CD4-positive, alpha-beta memory T cell (primary cell): ENCODE measurements at regions of chr17 and their contacts with region 1.

Region 1: DNA sequence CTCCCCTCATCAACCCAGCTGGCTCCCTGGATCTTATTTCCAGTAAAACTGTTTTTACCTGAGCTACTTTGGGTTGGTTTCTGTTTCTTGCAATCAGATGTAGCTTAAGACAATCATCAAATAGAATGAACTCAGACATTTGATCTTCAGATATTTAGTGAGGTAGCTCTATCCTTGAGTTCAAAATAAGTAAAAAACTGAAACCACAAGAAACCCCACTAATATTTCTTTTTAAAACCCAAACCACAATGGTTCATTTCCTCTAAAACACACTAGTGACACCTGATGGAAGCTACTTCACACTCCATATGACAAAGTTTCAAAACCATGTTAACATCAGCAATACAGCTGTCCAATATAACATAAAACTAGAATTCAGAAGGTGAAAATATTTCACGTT is 37.8 kb downstream of the CACNG1 start:
- DNase-seq: peak in 4 of 5 donors; percentile 53 to 67 (median 60)
- H3K4me3 ChIP-seq: no peak overlapping the region
- H3K4me3 Mint-ChIP-seq: peak overlapping the region in 7 of 8 donors; percentile 9 to 70 (median 45)
- H3K27ac ChIP-seq: peak overlapping the region; percentile 21
- H3K27ac Mint-ChIP-seq: peak overlapping the region; percentile 43 to 90 (median 67)
- H3K4me1 ChIP-seq: peaks cover 26% of the 10 kb centered on the region
- H3K4me1 Mint-ChIP-seq: peaks cover 15 to 31% (median 23%) of the 10 kb centered on the region in 4 donors
- H3K27me3 ChIP-seq: no peaks in the 10 kb centered on the region
- H3K27me3 Mint-ChIP-seq: no peaks in the 10 kb centered on the region

Region 2: GRCh38 chr17:66727639-66728570 is 354.2 kb before region 1 on chr17:
- CTCF ChIA-PET with region 1: interaction called, 3 read pairs
- POLR2A ChIA-PET with region 1: no interaction called
- intact Hi-C with region 1: loop called (anchors 5 kb)
- DNase-seq: peak in 4 of 5 donors; percentile 11 to 23 (median 20)
- H3K4me3 ChIP-seq: no peak overlapping the region
- H3K4me3 Mint-ChIP-seq: no peak overlapping the region
- H3K27ac ChIP-seq: no peak overlapping the region
- H3K27ac Mint-ChIP-seq: peak overlapping the region in 3 of 7 donors; percentile 8 to 30 (median 13)
- H3K4me1 ChIP-seq: peaks cover 6% of the 10 kb centered on the region
- H3K4me1 Mint-ChIP-seq: peaks cover 10 to 37% (median 19%) of the 10 kb centered on the region in 4 donors
- H3K27me3 ChIP-seq: no peaks in the 10 kb centered on the region
- H3K27me3 Mint-ChIP-seq: no peaks in the 10 kb centered on the region

Region 3: GRCh38 chr17:67165201-67165600 is 83.1 kb after region 1 on chr17:
- CTCF ChIA-PET with region 1: no interaction called
- POLR2A ChIA-PET with region 1: no interaction called
- intact Hi-C with region 1: no loop called
- DNase-seq: no peak
- H3K4me3 ChIP-seq: no peak overlapping the region
- H3K4me3 Mint-ChIP-seq: no peak overlapping the region
- H3K27ac ChIP-seq: no peak overlapping the region
- H3K27ac Mint-ChIP-seq: peak overlapping the region in 1 of 7 donors; percentile 35
- H3K4me1 ChIP-seq: no peaks in the 10 kb centered on the region
- H3K4me1 Mint-ChIP-seq: peaks cover 0 to 4% (median 0%) of the 10 kb centered on the region in 4 donors
- H3K27me3 ChIP-seq: no peaks in the 10 kb centered on the region
- H3K27me3 Mint-ChIP-seq: no peaks in the 10 kb centered on the region